HepG2 (cell line): ENCODE measurements at regions of chr3 and their contacts with region 1.

Region 1: DNA sequence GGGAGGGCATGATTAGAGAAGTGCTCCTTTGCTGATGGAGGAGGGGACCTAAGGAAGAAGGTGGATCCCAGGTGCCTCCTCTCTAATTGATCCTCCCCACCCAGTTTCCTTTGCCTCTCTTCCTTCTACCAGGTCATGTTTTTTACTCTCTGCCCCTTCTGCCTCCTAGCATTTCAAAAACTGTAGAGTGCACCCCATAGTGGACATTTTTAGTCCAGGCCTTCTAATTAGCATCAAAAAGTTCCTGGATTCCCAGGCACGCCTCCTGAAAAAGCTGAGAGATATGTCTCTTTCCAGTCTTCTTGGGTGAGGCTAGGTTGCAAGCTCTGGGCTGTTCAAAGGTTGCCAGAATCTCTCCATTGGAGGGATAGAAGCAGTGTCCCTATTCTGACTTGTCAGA is 18.7 kb upstream of the ITGB5 start:
- DNase-seq: no peak
- ATAC-seq: no peak
- H3K4me3 ChIP-seq: no peak overlapping the region
- H3K27ac ChIP-seq: no peak overlapping the region
- H3K4me1 ChIP-seq: peaks cover 22% of the 10 kb centered on the region
- H3K27me3 ChIP-seq: no peaks in the 10 kb centered on the region; a peak in 1 of 5 replicates
- CTCF ChIP-seq: no peak
- EP300 ChIP-seq: no peak
- POLR2A ChIP-seq: no peak
- RAD21 ChIP-seq: no peak

Region 2: DNA sequence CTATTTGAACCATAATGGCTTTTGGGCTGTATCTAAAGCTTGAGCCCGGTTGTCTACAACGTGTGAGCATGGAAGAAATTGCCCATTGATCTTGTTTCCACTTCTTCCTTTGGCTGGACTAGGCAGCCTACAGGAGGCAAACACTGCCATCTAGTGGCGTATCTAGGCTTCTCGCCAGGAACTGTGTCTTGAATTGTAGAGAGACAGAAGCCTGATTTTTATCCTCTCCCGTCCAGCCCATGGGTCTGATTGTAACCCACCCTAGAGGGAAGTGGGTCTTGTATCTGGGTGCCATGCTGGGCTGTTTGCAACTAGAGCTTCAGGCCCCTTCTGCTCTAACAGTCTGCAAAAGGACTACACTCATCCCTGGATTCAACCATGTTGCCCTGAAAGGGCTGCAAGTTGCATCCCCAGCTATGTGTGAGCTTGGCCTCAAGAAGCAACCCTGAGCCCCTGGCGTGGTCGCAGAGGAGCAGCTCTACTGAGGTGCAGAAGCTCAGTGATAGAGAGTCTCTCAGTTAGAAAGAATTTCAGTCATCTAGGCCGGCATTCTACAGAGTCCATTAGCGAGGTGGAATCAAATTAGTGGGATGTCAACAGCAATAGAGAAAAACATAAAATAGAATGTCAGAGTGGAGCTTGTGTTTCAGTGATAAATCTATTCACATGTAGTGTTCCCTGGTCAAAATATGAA is 345.8 kb before region 1 on chr3:
- CTCF ChIA-PET with region 1: no interaction called
- POLR2A ChIA-PET with region 1: no interaction called
- in situ Hi-C with region 1: loop called (anchors 10 kb)
- intact Hi-C with region 1: no loop called
- DNase-seq: peak; percentile 60
- ATAC-seq: peak; percentile 85
- H3K4me3 ChIP-seq: no peak overlapping the region
- H3K27ac ChIP-seq: no peak overlapping the region
- H3K4me1 ChIP-seq: peaks cover 6% of the 10 kb centered on the region
- H3K27me3 ChIP-seq: peaks cover 0 to 41% of the 10 kb centered on the region in 2 experiments; a peak in 3 of 5 replicates
- CTCF ChIP-seq: peak; percentile 92
- EP300 ChIP-seq: no peak
- POLR2A ChIP-seq: no peak
- RAD21 ChIP-seq: peak; percentile 83

Region 3: DNA sequence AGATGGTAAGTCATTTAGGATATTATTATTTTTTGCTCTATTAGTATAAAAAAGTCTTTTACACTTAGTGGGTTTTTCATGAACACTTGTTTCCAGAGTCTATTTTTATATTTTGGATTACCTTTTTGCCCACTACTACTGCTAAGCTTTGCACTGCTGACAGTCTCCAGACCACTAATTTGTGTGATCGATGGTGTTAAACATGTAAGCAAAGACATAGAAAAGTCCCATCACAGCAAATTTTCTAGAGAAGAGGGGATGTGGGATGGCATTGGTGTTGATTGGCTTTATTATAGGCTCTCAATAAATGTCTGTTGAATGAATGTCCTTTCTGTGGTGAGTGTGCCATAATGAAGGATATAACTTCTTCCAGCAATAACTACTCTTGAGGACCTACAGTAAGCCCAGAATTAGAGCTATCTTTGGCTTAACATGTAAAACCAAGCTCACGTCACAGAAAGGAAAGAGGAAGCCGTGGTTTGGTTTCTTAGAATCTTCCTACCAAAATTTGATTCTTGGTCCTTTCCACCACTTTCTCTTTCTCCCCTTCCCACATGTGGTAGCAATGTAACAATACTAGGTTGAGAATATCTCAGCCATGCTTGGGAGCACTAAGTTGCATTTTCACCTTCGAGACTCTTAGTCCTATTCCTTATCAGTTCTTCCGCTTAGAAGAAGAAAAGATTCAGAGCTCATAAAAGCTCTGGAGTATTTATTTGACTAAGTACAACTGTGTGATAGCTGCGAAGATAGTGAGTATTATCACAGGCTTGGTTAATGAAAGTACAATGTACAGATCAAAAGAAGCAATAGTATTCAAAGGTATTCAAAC is 266.2 kb before region 1 on chr3:
- CTCF ChIA-PET with region 1: no interaction called
- POLR2A ChIA-PET with region 1: no interaction called
- in situ Hi-C with region 1: no loop called
- intact Hi-C with region 1: no loop called
- DNase-seq: no peak
- ATAC-seq: no peak
- H3K4me3 ChIP-seq: no peak overlapping the region
- H3K27ac ChIP-seq: no peak overlapping the region
- H3K4me1 ChIP-seq: peaks cover 38% of the 10 kb centered on the region
- H3K27me3 ChIP-seq: no peaks in the 10 kb centered on the region
- CTCF ChIP-seq: no peak
- EP300 ChIP-seq: no peak
- POLR2A ChIP-seq: no peak
- RAD21 ChIP-seq: no peak

Region 4: GRCh38 chr3:124761250-124761796 is 144.5 kb before region 1 on chr3:
- CTCF ChIA-PET with region 1: interaction called, 27 read pairs
- POLR2A ChIA-PET with region 1: interaction called, 20 read pairs
- in situ Hi-C with region 1: loop called (anchors 5 kb)
- intact Hi-C with region 1: loop called (anchors 1 kb)
- DNase-seq: peak; percentile 66
- ATAC-seq: peak; percentile 59
- H3K4me3 ChIP-seq: peak overlapping the region in 1 of 3 experiments; percentile 27; a peak in 1 of 6 replicates
- H3K27ac ChIP-seq: no peak overlapping the region
- H3K4me1 ChIP-seq: peaks cover 23% of the 10 kb centered on the region
- H3K27me3 ChIP-seq: no peaks in the 10 kb centered on the region
- CTCF ChIP-seq: peak; percentile 96
- EP300 ChIP-seq: no peak
- POLR2A ChIP-seq: no peak
- RAD21 ChIP-seq: peak; percentile 81

Region 5: GRCh38 chr3:124768812-124769211 is 137.0 kb before region 1 on chr3:
- CTCF ChIA-PET with region 1: interaction called, 10 read pairs
- POLR2A ChIA-PET with region 1: interaction called, 6 read pairs
- in situ Hi-C with region 1: loop called (anchors 5 kb)
- intact Hi-C with region 1: loop called (anchors 1 kb)
- DNase-seq: peak; percentile 42
- ATAC-seq: peak; percentile 87
- H3K4me3 ChIP-seq: no peak overlapping the region
- H3K27ac ChIP-seq: no peak overlapping the region
- H3K4me1 ChIP-seq: no peaks in the 10 kb centered on the region
- H3K27me3 ChIP-seq: no peaks in the 10 kb centered on the region
- CTCF ChIP-seq: peak; percentile 66
- EP300 ChIP-seq: no peak
- POLR2A ChIP-seq: no peak
- RAD21 ChIP-seq: no peak

Region 6: GRCh38 chr3:124786441-124787241 is 119.2 kb before region 1 on chr3:
- CTCF ChIA-PET with region 1: interaction called, 11 read pairs
- POLR2A ChIA-PET with region 1: interaction called, 12 read pairs
- in situ Hi-C with region 1: no loop called
- intact Hi-C with region 1: loop called (anchors 1 kb)
- DNase-seq: no peak
- ATAC-seq: peak; percentile 52
- H3K4me3 ChIP-seq: no peak overlapping the region
- H3K27ac ChIP-seq: no peak overlapping the region
- H3K4me1 ChIP-seq: peaks cover 23% of the 10 kb centered on the region
- H3K27me3 ChIP-seq: no peaks in the 10 kb centered on the region
- CTCF ChIP-seq: peak; percentile 34; the same call in 1 of the 2 replicates
- EP300 ChIP-seq: no peak
- POLR2A ChIP-seq: no peak
- RAD21 ChIP-seq: no peak

Region 7: DNA sequence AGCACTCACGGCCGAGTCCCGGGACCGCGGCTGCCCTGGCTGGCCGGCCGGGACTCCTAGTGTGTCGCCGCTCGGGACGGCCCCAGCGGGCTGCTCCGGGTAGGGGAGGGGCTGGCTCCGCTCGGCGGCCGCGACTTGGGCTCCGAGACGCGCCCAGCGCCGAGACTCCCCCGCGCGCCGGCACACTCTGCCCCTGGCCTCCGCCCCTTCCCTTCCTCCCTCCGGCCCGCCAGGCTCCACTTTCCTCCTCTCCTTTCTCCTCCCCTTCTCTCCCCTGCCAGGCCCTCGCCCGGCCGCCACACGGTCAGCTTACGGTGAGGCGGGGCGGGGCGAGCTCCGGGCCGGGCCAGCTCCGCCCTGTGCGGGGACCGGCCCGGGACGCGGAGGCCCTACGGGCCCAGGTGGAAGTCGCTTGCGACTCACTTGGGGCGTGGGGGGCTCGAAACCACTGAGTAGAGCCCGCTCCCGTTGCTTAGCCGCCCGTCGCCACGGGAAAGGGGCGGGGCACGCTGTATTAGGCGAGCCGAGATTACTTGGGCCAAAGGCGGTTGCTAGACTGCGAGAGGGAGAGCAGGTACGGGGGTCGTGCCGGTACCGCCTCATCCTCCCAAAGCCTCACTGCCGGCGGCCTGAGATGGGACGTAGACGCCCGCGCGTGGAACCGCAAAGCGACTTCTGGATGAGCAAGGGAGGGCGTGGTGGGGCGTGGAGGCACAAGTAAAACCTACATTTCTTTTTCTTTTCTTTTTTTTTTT is 18.5 kb before region 1 on chr3 and contains the start of gene ITGB5:
- CTCF ChIA-PET with region 1: no interaction called
- POLR2A ChIA-PET with region 1: interaction called, 14 read pairs
- in situ Hi-C with region 1: no loop called
- intact Hi-C with region 1: no loop called
- DNase-seq: peak; percentile 61
- ATAC-seq: peak; percentile 81
- H3K4me3 ChIP-seq: peak within 1 kb of the TSS; percentile 82 to 85 (median 85)
- H3K27ac ChIP-seq: peak within 1 kb of the TSS; percentile 90
- H3K4me1 ChIP-seq: peaks cover 61% of the 10 kb centered on the region
- H3K27me3 ChIP-seq: no peaks in the 10 kb centered on the region
- CTCF ChIP-seq: no peak; the same call in 1 of the 2 replicates
- EP300 ChIP-seq: no peak
- POLR2A ChIP-seq: peak in 1 of 2 experiments; percentile 69; a peak in 2 of 4 replicates
- RAD21 ChIP-seq: peak; percentile 63
- total RNA-seq, gene ITGB5: 50.2 and 74.1 TPM in 2 replicates

Region 8: DNA sequence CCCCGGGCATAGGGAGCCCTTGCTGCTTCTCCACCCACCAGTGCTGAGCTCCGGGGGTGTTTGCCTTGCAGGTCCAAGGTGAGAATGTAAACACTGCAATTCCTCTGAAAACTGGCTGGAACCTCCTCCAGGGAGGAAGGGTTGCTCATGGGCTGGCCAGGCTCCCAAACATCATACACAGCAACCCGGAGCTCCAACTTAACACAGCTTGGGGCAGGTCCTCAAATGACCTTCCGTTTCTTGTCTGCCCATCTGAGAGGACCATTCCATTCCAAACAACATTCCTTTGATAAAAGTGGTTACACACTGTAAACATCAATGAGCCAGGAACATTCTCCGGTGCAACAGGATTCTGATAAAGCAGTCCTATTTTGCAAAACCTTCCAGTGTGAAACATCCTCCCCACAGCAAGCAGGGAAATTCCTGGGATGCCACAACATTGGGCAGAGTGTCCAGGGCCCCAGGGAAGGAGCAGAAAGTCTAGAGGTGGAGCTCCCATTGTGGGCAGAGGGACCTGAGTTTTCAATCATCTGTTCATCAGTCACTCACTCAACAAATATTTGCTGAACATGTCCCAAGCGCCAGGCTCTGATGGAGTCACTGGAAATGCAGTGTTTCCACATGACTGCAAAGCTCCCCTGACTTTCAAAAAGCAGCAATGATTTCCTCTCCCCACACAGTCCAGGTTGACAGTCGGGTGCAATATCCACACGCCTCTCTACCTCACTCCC is 157.2 kb after region 1 on chr3:
- CTCF ChIA-PET with region 1: no interaction called
- POLR2A ChIA-PET with region 1: no interaction called
- in situ Hi-C with region 1: no loop called
- intact Hi-C with region 1: no loop called
- DNase-seq: peak; percentile 99
- ATAC-seq: peak; percentile 92
- H3K4me3 ChIP-seq: peak overlapping the region in 1 of 3 experiments; percentile 27; a peak in 2 of 6 replicates
- H3K27ac ChIP-seq: peak overlapping the region; percentile 67
- H3K4me1 ChIP-seq: peaks cover 61% of the 10 kb centered on the region
- H3K27me3 ChIP-seq: peaks cover 0 to 15% of the 10 kb centered on the region in 2 experiments; a peak in 3 of 5 replicates
- CTCF ChIP-seq: no peak
- EP300 ChIP-seq: peak; percentile 87 to 91; a peak in 2 of 4 replicates
- POLR2A ChIP-seq: peak in 1 of 2 experiments; percentile 66; a peak in 2 of 4 replicates
- RAD21 ChIP-seq: no peak